ENCODE measurements at regions of chr21 and their contacts with region 1.

Region 1: GRCh38 chr21:35840197-35840799 is 220.0 kb downstream of the SETD4 start:
- DNase-seq: peak; percentile 68
- ATAC-seq: no peak
- H3K4me3 ChIP-seq: no peak overlapping the region
- H3K4me3 Mint-ChIP-seq: no peak overlapping the region
- H3K27ac ChIP-seq: no peak overlapping the region
- H3K27ac Mint-ChIP-seq: no peak overlapping the region
- H3K4me1 ChIP-seq: no peaks in the 10 kb centered on the region
- H3K4me1 Mint-ChIP-seq: no peaks in the 10 kb centered on the region
- H3K27me3 ChIP-seq: no peaks in the 10 kb centered on the region
- H3K27me3 Mint-ChIP-seq: peaks cover 13% of the 10 kb centered on the region
- CTCF ChIP-seq: peak; percentile 86

Region 2: DNA sequence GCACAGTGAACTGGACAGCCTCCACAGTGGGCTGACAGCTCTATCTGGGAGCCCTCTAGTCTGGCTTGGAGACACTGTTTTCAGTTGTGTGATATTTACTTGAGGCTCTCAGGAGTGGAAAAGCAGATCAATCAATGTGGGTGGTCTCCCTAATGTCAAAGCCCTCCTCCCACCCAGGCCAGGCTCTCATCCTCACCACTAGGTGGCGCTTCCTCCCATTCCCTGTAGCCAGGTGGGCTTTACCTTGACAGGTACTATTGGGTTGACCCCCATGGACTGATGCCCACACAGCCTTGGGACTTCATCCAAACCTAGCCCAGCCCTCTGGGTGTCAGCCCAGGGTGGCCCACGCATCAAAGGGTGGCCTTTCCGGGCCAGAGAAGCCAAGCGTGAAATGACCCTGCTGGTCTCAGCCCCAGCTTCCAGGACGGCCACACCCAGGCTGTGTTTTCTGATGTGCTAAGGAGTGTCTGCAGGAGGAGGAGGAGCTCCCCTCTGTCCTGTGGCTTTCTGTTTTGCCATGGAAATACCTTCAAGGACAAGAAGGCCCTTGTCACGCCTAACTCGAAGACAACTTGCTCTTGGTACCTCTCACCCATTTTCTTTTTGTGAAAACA is 1117.5 kb before region 1 on chr21:
- CTCF ChIA-PET with region 1: interaction called, 17 read pairs
- POLR2A ChIA-PET with region 1: no interaction called
- intact Hi-C with region 1: no loop called
- DNase-seq: peak; percentile 41
- ATAC-seq: no peak
- H3K4me3 ChIP-seq: no peak overlapping the region
- H3K4me3 Mint-ChIP-seq: no peak overlapping the region
- H3K27ac ChIP-seq: no peak overlapping the region
- H3K27ac Mint-ChIP-seq: no peak overlapping the region
- H3K4me1 ChIP-seq: no peaks in the 10 kb centered on the region
- H3K4me1 Mint-ChIP-seq: no peaks in the 10 kb centered on the region
- H3K27me3 ChIP-seq: peaks cover 0 to 9% (median 3%) of the 10 kb centered on the region in 4 experiments
- H3K27me3 Mint-ChIP-seq: peaks cover 20% of the 10 kb centered on the region
- CTCF ChIP-seq: peak; percentile 67

Region 3: DNA sequence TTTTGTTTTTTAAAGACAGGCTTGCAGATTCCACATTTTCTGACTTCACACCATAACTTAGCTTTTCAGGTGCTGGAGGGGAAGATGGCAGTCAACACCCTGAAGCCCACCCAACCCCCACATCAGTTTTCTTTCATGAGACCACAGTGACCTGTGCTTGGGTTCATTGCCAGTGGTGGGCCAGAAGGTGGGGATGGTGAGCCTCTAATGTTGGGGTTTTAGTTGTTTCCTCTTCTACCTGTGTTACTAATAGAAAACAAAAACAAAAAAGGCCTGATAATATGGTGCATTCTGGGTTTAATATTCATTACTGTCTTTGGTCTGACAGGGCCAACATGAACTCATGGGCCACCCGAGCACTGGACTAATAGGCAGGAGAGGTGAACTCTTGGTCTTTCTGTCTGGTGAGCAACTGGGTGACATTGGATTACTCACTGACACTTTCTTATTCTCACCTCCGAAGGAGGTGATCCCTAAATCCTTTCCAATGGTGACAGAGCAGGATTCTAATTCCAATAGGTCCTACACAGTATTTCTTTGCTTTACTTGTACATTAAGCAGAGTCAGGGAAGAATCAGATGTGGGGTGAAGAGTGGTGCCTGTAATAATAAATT is 1038.7 kb before region 1 on chr21:
- CTCF ChIA-PET with region 1: interaction called, 14 read pairs
- POLR2A ChIA-PET with region 1: no interaction called
- intact Hi-C with region 1: loop called (anchors 1 kb)
- DNase-seq: peak; percentile 55
- ATAC-seq: peak; percentile 70
- H3K4me3 ChIP-seq: no peak overlapping the region
- H3K4me3 Mint-ChIP-seq: no peak overlapping the region
- H3K27ac ChIP-seq: peak overlapping the region in 1 of 2 donors; percentile 25
- H3K27ac Mint-ChIP-seq: no peak overlapping the region
- H3K4me1 ChIP-seq: no peaks in the 10 kb centered on the region
- H3K4me1 Mint-ChIP-seq: peaks cover 20% of the 10 kb centered on the region
- H3K27me3 ChIP-seq: no peaks in the 10 kb centered on the region
- H3K27me3 Mint-ChIP-seq: no peaks in the 10 kb centered on the region
- CTCF ChIP-seq: peak; percentile 68

Region 4: GRCh38 chr21:35658242-35658641 is 182.1 kb before region 1 on chr21:
- CTCF ChIA-PET with region 1: no interaction called
- POLR2A ChIA-PET with region 1: no interaction called
- intact Hi-C with region 1: no loop called
- DNase-seq: no peak
- ATAC-seq: no peak
- H3K4me3 ChIP-seq: no peak overlapping the region
- H3K4me3 Mint-ChIP-seq: no peak overlapping the region
- H3K27ac ChIP-seq: no peak overlapping the region
- H3K27ac Mint-ChIP-seq: no peak overlapping the region
- H3K4me1 ChIP-seq: no peaks in the 10 kb centered on the region
- H3K4me1 Mint-ChIP-seq: no peaks in the 10 kb centered on the region
- H3K27me3 ChIP-seq: no peaks in the 10 kb centered on the region
- H3K27me3 Mint-ChIP-seq: peaks cover 10% of the 10 kb centered on the region
- CTCF ChIP-seq: no peak

Region 5: DNA sequence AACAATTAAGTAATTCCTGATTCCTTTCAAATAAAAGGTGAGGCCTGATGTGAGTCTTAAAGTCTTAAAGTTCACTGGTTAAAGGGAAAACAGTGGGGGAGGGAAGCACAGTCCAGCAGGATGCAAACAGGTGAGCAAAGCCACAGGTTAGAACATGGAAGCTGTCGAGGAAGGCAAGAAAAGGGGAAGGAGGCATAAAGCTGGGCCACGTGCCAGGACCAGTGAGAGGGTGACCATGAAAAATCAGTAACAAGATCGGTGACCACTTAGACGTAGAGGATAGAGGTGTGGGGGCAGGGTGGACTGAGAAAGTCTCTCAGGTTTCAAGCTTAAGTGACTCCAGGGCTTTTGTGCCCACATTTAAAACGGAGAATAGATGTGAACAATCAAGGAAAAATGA is 11.2 kb before region 1 on chr21:
- CTCF ChIA-PET with region 1: interaction called, 10 read pairs
- POLR2A ChIA-PET with region 1: no interaction called
- intact Hi-C with region 1: no loop called
- DNase-seq: no peak
- ATAC-seq: no peak
- H3K4me3 ChIP-seq: no peak overlapping the region
- H3K4me3 Mint-ChIP-seq: no peak overlapping the region
- H3K27ac ChIP-seq: no peak overlapping the region
- H3K27ac Mint-ChIP-seq: no peak overlapping the region
- H3K4me1 ChIP-seq: no peaks in the 10 kb centered on the region
- H3K4me1 Mint-ChIP-seq: no peaks in the 10 kb centered on the region
- H3K27me3 ChIP-seq: peaks cover 0 to 1% (median 0%) of the 10 kb centered on the region in 4 experiments
- H3K27me3 Mint-ChIP-seq: peaks cover 29% of the 10 kb centered on the region
- CTCF ChIP-seq: no peak

Region 6: DNA sequence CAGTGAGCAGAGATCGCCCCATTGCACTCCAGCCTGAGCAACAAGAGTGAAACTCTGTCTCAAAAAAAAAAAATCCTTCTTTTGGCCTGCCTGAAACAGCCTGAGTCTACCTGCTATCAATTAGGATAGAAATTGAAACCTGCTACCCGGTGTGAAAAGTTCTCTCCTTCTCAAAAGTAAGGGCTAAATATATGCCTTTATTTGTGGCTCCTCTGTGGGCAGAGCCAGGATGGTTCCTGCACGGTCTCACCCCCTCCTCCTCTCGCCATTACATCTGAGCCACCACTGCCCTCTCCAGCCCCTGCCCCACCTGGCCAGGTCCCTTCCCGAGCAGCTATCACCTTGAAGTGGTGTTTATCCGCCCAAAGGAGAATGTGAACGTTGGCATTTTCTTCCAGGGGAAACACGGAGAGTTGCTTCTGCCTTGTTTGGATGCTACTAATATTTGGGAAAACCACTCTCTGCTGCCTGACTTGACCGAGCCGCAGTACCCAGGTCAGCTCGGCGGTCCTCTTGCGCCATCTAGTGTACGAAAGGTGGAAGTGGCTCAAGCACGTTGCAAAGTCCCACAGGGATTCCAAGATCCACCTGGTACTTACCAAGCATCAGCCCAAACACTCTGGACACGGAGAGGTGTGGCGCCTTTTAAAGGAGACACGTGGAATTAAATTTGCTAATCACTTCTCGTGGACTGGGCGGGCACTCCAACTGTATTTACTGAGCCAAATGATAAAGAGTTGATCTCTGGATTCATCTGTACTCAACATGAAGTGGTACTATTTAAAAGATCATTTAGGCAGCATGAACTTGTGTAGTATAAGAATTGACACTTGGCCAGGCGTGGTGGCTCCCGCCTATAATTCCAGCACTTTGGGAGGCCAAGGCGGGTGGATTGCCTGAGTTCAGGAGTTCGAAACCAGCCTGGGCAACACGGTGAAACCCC is 188.1 kb after region 1 on chr21:
- CTCF ChIA-PET with region 1: interaction called, 28 read pairs
- POLR2A ChIA-PET with region 1: no interaction called
- intact Hi-C with region 1: loop called (anchors 2 kb)
- DNase-seq: peak; percentile 80
- ATAC-seq: peak; percentile 87
- H3K4me3 ChIP-seq: no peak overlapping the region
- H3K4me3 Mint-ChIP-seq: no peak overlapping the region
- H3K27ac ChIP-seq: no peak overlapping the region
- H3K27ac Mint-ChIP-seq: no peak overlapping the region
- H3K4me1 ChIP-seq: peaks cover 0 to 6% of the 10 kb centered on the region in 2 donors
- H3K4me1 Mint-ChIP-seq: peaks cover 5% of the 10 kb centered on the region
- H3K27me3 ChIP-seq: no peaks in the 10 kb centered on the region
- H3K27me3 Mint-ChIP-seq: no peaks in the 10 kb centered on the region
- CTCF ChIP-seq: peak; percentile 97